Ascending aorta (tissue), 2 donors: ENCODE measurements at regions of chr16 and their contacts with region 1.

Region 1: DNA sequence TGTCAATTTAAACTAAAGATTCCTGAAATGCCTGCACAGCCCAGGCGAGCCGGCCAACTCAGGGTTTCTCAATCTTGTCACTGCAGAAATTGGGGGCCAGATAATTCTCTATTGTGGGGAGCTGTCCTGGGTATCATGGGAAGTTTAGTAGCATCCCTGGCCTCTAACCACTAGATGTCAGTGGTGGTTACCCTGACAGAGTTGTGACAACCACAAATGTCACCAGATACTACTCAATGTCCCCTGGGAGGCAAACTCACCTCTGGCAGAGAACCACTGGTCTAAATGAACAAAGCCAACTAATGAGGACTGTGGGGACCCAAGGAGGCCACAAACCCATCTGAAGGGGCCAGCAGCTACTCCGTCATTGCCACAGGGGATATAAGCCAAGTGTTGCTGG is 90.9 kb downstream of the MYH11 start:
- DNase-seq: no peak
- H3K4me3 ChIP-seq: no peak overlapping the region
- H3K27ac ChIP-seq: peak overlapping the region; percentile 57 to 63
- H3K4me1 ChIP-seq: peaks cover 9 to 23% of the 10 kb centered on the region in 2 donors
- H3K27me3 ChIP-seq: no peaks in the 10 kb centered on the region
- CTCF ChIP-seq: peak; percentile 42 to 55 (median 46)

Region 2: GRCh38 chr16:15811481-15812400 is 45.9 kb after region 1 on chr16:
- intact Hi-C with region 1: loop called (anchors 1 kb)
- DNase-seq: peak; percentile 36 to 91
- H3K4me3 ChIP-seq: peak overlapping the region in 1 of 2 donors; percentile 40
- H3K27ac ChIP-seq: peak overlapping the region; percentile 85 to 92
- H3K4me1 ChIP-seq: peaks cover 43 to 67% of the 10 kb centered on the region in 2 donors
- H3K27me3 ChIP-seq: no peaks in the 10 kb centered on the region
- CTCF ChIP-seq: peak in 2 of 3 experiments; percentile 7 to 16

Region 3: DNA sequence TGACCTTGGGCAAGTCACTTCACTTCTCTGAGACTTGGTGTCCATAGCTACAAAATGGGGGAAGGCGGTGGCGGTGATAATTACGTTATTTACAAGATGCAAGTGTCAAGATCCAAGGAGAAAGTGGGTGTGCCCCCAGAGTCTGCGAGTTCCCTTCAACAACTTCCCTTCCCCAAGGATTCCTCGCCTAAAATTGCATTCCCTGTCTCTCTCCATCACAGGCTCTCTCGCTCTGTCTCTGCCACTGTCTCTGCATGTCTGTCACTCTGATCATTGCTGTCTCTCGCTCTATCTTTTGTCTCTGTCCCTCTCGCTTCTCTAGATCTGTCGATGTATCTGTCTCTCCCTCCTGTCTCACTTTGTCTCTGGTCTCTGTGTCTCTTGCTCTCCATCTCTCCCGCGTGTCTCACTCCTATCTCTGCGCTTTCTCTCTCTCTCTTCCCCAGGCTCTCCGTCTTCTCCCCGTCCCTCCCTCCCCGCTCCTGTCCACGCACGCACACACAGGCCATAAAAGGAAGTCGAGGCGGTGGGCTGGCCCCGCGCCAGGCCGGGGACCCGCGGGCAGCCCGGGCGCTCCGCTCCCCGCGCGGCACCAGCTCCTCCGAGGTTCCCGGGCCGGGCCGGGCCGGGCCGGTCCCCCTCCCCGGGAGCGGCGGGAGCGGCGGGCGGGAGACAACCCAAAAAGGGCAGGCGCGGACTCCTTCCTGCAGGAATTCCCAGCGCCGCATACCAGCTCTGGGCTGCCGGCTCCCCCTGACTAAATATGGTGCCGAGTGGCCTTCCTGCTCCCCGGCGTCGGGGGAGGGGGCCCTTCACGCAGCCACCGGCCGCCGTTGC is 92.1 kb after region 1 on chr16:
- intact Hi-C with region 1: loop called (anchors 5 kb)
- DNase-seq: peak; percentile 25 to 86
- H3K4me3 ChIP-seq: peak overlapping the region; percentile 71 to 92
- H3K27ac ChIP-seq: peak overlapping the region; percentile 88 to 92
- H3K4me1 ChIP-seq: peaks cover 0 to 3% of the 10 kb centered on the region in 2 donors
- H3K27me3 ChIP-seq: no peaks in the 10 kb centered on the region
- CTCF ChIP-seq: peak in 1 of 3 experiments; percentile 1

Region 4: GRCh38 chr16:15888072-15888976 is 122.4 kb after region 1 on chr16 and contains the start of gene CEP20:
- intact Hi-C with region 1: no loop called
- DNase-seq: peak; percentile 99 to 100
- H3K4me3 ChIP-seq: peak within 1 kb of the TSS; percentile 81 to 87
- H3K27ac ChIP-seq: peak within 1 kb of the TSS; percentile 79 to 93
- H3K4me1 ChIP-seq: peaks cover 0 to 11% of the 10 kb centered on the region in 2 donors
- H3K27me3 ChIP-seq: no peaks in the 10 kb centered on the region
- CTCF ChIP-seq: peak; percentile 11 to 55 (median 18)
- total RNA-seq, gene CEP20: 7.6 TPM

Region 5: GRCh38 chr16:16127469-16128116 is 361.7 kb after region 1 on chr16:
- intact Hi-C with region 1: loop called (anchors 10 kb)
- DNase-seq: peak in 1 of 2 donors; percentile 86
- H3K4me3 ChIP-seq: no peak overlapping the region
- H3K27ac ChIP-seq: peak overlapping the region; percentile 32 to 62
- H3K4me1 ChIP-seq: no peaks in the 10 kb centered on the region
- H3K27me3 ChIP-seq: no peaks in the 10 kb centered on the region
- CTCF ChIP-seq: peak; percentile 86 to 91 (median 88)

Region 6: DNA sequence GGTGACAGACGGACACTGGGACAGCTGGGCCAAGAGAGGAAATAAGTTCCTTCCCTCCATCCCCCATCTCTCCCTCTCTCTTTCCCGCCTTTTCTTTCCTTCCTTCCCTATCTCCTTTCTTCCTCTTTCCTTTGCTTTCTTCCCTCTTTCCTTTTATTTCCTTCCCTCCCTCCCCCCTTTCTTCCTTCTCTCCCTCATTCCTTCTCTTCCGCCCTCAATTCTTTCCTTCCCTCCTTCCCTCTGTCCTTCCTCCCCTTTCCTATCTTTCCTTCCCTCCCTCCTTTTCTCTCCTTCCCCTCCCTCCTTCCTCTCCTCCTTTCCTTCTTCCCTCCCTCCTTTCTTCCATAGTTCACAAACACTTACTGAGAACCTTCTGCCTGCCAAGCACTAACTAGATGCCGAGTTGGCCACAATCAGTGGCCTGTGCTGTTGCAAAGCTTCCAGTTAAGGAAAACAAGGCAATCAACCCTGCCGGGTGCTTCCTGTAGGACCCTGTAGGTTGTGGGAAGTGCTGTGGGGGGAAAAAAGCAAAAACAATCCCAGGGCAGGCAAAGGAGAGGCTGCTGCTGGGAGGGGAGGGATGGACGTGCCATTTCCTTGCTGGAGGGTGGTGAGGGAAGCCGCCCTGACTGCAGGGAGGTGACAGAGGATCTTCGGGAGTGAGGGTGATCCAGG is 425.8 kb after region 1 on chr16:
- intact Hi-C with region 1: loop called (anchors 5 kb)
- DNase-seq: no peak
- H3K4me3 ChIP-seq: no peak overlapping the region
- H3K27ac ChIP-seq: no peak overlapping the region
- H3K4me1 ChIP-seq: no peaks in the 10 kb centered on the region
- H3K27me3 ChIP-seq: no peaks in the 10 kb centered on the region
- CTCF ChIP-seq: no peak